Naive thymus-derived CD4-positive, alpha-beta T cell (primary cell): ENCODE measurements at regions of chr11 and their contacts with region 1.

Region 1: DNA sequence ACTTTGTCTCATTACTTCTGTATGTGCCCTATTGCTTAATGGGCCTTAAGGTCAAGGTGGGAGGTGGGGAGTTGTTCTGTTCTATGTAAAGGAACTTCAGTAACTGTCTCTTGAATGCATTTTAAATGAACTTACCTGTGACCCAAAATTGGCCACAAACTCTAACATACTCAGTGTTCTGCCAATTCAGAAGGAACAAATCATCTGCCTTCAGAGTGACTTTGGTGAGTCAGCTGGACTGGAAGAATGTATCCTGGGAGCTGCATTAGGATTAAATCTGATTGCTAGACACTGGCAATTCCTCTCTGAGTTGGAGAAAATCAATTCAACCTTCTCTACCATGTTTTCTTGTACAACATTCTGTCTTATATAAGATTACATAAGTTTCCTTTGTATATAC is 1104.8 kb downstream of the DLG2 start:
- DNase-seq: no peak
- ATAC-seq: no peak
- H3K4me3 ChIP-seq: no peak overlapping the region
- H3K4me3 Mint-ChIP-seq: no peak overlapping the region
- H3K27ac ChIP-seq: no peak overlapping the region
- H3K27ac Mint-ChIP-seq: no peak overlapping the region
- H3K4me1 ChIP-seq: no peaks in the 10 kb centered on the region
- H3K4me1 Mint-ChIP-seq: no peaks in the 10 kb centered on the region
- H3K27me3 ChIP-seq: no peaks in the 10 kb centered on the region
- H3K27me3 Mint-ChIP-seq: no peaks in the 10 kb centered on the region

Region 2: DNA sequence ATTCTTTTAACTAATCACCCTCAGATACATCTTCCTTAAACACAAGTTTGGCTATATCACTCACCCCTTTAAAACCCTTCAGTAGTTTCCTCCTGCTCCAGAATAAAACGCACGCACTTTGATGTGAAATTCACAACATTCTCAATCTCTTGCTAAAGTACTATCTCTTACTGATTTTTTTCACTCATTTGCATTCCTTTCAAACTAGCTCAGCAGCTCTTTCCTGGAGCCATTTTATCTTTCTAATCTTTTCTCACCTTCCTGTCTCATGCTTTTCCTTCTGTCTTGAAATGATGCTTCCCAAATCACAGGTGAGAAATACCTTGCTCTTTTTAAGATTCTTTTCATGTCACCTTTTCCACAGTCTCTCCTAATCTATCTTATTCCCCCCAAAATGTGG is 30.5 kb after region 1 on chr11:
- CTCF ChIA-PET with region 1: no interaction called
- POLR2A ChIA-PET with region 1: no interaction called
- intact Hi-C with region 1: loop called in 1 of 2 experiments (anchors 1 kb)
- DNase-seq: no peak
- ATAC-seq: no peak
- H3K4me3 ChIP-seq: no peak overlapping the region
- H3K4me3 Mint-ChIP-seq: no peak overlapping the region
- H3K27ac ChIP-seq: no peak overlapping the region
- H3K27ac Mint-ChIP-seq: no peak overlapping the region
- H3K4me1 ChIP-seq: no peaks in the 10 kb centered on the region
- H3K4me1 Mint-ChIP-seq: no peaks in the 10 kb centered on the region
- H3K27me3 ChIP-seq: no peaks in the 10 kb centered on the region
- H3K27me3 Mint-ChIP-seq: no peaks in the 10 kb centered on the region